Activated naive CD4-positive, alpha-beta T cell treated with anti-CD3 and anti-CD28 coated beads for 36 hours (primary cell): ENCODE measurements at regions of chr13 and their contacts with region 1.

Region 1: GRCh38 chr13:20160847-20161274 is at the start of gene GJA3:
- DNase-seq: peak; percentile 68
- H3K4me3 Mint-ChIP-seq: peak within 1 kb of the TSS; percentile 73
- H3K27ac Mint-ChIP-seq: no peak within 1 kb of the TSS
- H3K4me1 Mint-ChIP-seq: peaks cover 8% of the 10 kb centered on the region
- H3K27me3 Mint-ChIP-seq: peaks cover 47% of the 10 kb centered on the region
- total RNA-seq, gene GJA3: 0.05 to 0.10 TPM

Region 2: GRCh38 chr13:19587635-19588300 is 573.1 kb before region 1 on chr13:
- CTCF ChIA-PET with region 1: no interaction called
- intact Hi-C with region 1: loop called (anchors 10 kb)
- DNase-seq: peak; percentile 58
- H3K4me3 Mint-ChIP-seq: peak overlapping the region; percentile 75
- H3K27ac Mint-ChIP-seq: peak overlapping the region; percentile 93
- H3K4me1 Mint-ChIP-seq: peaks cover 17% of the 10 kb centered on the region
- H3K27me3 Mint-ChIP-seq: no peaks in the 10 kb centered on the region

Region 3: GRCh38 chr13:19782049-19782726 is 378.7 kb before region 1 on chr13:
- CTCF ChIA-PET with region 1: no interaction called
- intact Hi-C with region 1: loop called (anchors 2 kb)
- DNase-seq: peak; percentile 74
- H3K4me3 Mint-ChIP-seq: peak overlapping the region; percentile 96
- H3K27ac Mint-ChIP-seq: peak overlapping the region; percentile 98
- H3K4me1 Mint-ChIP-seq: peaks cover 7% of the 10 kb centered on the region
- H3K27me3 Mint-ChIP-seq: peaks cover 3% of the 10 kb centered on the region

Region 4: DNA sequence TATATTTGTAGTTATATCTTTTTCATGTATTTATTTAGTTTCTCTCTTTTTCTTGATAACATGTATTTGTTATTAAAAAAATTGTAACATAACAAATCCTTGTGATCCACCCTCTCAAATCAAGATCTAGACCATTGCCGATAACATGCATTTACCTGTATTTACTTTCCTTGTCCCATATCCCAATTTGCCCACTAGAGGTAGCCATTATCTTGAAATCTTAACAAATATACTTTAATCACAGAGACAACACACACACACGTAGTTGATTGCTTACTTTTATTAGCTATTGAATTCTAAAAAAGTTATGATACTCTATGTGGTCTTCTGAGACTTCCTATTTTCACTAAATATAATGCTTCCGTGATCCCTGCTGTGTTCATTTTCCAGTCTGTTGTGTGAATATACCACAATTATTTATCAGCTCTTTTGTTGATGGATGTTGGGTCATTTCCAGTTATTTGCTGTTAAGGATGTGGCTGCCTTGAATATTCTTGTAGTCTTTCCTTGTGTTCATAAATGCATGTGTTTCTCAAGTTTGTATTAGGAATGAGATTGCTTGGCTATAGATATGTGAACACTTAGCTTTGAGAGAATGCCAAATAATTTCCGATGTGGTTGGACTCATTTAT is 233.6 kb before region 1 on chr13:
- CTCF ChIA-PET with region 1: no interaction called
- intact Hi-C with region 1: loop called (anchors 1 kb)
- DNase-seq: no peak
- H3K4me3 Mint-ChIP-seq: no peak overlapping the region
- H3K27ac Mint-ChIP-seq: no peak overlapping the region
- H3K4me1 Mint-ChIP-seq: no peaks in the 10 kb centered on the region
- H3K27me3 Mint-ChIP-seq: no peaks in the 10 kb centered on the region

Region 5: DNA sequence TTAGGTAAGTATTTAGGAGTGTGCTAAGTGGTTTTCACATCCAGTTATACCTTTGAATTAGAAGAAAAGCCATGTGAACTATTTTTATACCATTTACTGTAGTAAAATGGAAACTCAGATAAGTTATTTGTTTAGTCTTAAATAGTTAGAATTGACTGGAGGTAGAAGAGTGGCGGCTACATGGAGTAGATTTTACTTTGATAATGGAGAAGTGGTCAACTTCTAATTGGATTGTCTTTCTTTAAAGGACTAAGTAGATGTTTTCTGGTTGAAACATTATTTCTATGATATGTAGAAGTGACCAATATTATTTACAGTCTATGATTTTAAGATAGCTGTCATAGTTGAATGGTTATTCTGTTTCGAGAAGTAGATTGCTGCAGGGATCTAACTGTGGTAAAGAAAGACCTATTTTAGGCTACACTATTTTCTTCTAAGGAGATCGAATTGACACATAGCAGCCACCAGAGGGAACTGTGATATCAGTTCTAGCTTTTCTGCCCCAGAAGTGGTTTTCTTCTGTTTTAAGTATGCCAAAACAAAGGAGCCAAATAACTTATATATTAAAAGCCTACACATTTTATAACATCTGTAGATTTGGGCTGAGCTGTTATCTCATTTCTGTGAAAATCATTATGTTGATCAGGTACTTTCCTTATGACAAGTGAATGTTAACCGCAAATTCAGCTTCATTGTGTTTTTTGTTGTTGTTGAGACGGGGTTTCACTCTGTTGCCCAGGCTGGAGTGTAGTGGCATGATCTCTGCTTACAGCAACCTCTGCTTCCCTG is 176.2 kb before region 1 on chr13:
- CTCF ChIA-PET with region 1: interaction called, 11 read pairs
- intact Hi-C with region 1: loop called (anchors 1 kb)
- DNase-seq: no peak
- H3K4me3 Mint-ChIP-seq: no peak overlapping the region
- H3K27ac Mint-ChIP-seq: no peak overlapping the region
- H3K4me1 Mint-ChIP-seq: peaks cover 35% of the 10 kb centered on the region
- H3K27me3 Mint-ChIP-seq: no peaks in the 10 kb centered on the region

Region 6: DNA sequence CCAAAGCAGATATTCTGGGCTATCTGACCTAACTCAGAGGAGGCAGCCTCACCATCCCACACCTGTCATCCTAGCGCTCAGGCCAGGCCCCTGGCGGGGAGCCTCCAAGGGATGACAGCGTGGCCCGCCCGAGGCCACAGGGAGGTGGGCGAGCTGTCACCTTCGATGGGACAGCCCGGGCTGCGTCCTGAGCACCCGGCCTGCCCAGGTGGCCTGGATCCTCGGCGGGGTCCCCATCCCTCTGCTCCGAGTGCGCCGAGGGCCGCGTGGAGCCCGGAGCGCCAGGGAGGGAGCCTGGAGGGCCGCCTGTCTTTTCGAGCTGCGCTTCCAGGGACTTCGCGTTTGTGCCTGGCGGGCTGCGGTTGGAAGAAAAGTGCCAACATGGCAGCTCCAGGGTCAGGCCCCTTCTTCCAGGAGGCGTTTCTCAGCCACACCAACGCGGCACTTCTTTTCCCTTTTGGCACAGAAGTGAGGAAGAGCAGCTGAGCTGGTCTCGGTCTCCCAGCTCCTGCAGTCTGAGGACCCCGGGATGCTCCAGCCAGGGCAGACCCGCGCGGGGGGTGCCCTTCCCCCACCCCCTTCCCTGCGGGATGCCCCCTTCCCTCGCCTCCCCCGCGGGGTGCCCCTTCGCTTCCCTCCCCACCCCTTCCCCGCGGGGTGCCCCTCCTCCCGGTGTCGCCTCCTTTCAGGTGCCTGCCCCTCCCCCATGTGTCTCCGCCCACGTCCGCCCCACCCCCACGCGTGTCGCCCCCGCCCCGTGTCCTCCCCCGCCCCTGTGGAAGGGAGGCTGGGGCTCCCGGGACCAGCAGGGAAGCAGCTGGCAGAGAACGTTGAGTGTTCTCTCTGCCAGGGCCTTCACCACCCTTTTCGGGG is 42.4 kb before region 1 on chr13:
- CTCF ChIA-PET with region 1: interaction called, 11 read pairs
- intact Hi-C with region 1: no loop called
- DNase-seq: peak; percentile 33
- H3K4me3 Mint-ChIP-seq: peak overlapping the region; percentile 83
- H3K27ac Mint-ChIP-seq: no peak overlapping the region
- H3K4me1 Mint-ChIP-seq: peaks cover 10% of the 10 kb centered on the region
- H3K27me3 Mint-ChIP-seq: no peaks in the 10 kb centered on the region

Region 7: DNA sequence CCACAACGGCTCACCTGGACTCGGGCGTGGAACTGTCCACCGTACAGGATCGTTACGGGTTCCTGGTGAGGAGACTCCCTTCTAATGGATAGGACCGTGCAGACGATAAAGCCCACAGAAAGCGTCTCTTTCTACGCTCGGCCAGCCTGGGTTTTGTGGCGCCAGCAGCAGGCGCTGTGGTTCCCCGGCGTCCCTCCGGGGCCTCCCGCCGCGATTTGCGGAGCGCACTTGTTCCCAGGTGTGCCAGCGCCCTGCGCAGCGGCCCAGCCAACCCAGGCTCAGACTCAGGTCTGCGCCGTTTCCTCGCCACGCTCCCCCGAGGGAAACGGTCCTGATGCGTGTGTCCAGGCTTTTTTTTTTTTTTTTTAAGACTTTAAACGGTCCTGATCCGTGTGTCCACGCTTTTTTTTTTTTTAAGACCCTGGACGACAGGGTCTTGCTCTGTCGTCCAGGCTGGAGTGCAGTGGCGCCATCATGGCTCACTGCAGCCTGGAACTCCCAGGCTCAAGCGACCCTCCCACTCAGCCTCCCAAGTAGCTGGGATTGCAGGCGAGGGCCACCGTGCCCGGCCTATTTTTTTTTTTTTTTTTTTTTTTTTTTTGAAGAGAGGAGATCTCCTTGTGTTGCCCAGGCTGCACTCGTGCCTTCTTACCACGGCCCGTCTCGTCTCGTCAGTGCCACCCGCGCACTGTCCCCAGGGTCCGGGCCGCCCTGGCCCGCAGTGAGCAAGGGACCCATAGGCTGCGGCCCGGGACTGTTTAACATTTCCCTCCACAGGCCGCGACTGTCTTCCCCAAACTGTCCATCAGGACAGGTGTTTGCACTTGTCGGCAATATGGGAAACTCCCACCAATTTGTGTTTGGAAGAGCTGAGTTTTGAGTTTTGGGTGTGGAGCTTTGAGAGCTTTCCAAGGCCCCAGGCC is 23.8 kb before region 1 on chr13:
- CTCF ChIA-PET with region 1: interaction called, 5 read pairs
- intact Hi-C with region 1: loop called (anchors 1 kb)
- DNase-seq: peak; percentile 61
- H3K4me3 Mint-ChIP-seq: no peak overlapping the region
- H3K27ac Mint-ChIP-seq: no peak overlapping the region
- H3K4me1 Mint-ChIP-seq: peaks cover 3% of the 10 kb centered on the region
- H3K27me3 Mint-ChIP-seq: peaks cover 41% of the 10 kb centered on the region